Kidney (tissue), 22 donors: ENCODE measurements at regions of chr6 and their contacts with region 1.

Region 1: GRCh38 chr6:36027501-36028087 is at the start of gene MAPK14:
- DNase-seq: peak; percentile 99 to 100 (median 99)
- H3K4me3 ChIP-seq: peak within 1 kb of the TSS; percentile 83 to 99 (median 96)
- H3K27ac ChIP-seq: peak within 1 kb of the TSS; percentile 92 to 93
- H3K4me1 ChIP-seq: peaks cover 0 to 5% (median 4%) of the 10 kb centered on the region in 3 donors
- H3K27me3 ChIP-seq: no peaks in the 10 kb centered on the region
- CTCF ChIP-seq: peak; percentile 94
- total RNA-seq, gene MAPK14: 56.6 TPM

Region 2: GRCh38 chr6:36094753-36095496 is 67.3 kb after region 1 on chr6:
- intact Hi-C with region 1: loop called (anchors 5 kb)
- DNase-seq: peak; percentile 82 to 91 (median 87)
- H3K4me3 ChIP-seq: no peak overlapping the region
- H3K27ac ChIP-seq: no peak overlapping the region
- H3K4me1 ChIP-seq: peaks cover 0 to 5% (median 5%) of the 10 kb centered on the region in 3 donors
- H3K27me3 ChIP-seq: no peaks in the 10 kb centered on the region
- CTCF ChIP-seq: peak; percentile 92